ENCODE measurements at regions of chr15 and their contacts with region 1.

Region 1: DNA sequence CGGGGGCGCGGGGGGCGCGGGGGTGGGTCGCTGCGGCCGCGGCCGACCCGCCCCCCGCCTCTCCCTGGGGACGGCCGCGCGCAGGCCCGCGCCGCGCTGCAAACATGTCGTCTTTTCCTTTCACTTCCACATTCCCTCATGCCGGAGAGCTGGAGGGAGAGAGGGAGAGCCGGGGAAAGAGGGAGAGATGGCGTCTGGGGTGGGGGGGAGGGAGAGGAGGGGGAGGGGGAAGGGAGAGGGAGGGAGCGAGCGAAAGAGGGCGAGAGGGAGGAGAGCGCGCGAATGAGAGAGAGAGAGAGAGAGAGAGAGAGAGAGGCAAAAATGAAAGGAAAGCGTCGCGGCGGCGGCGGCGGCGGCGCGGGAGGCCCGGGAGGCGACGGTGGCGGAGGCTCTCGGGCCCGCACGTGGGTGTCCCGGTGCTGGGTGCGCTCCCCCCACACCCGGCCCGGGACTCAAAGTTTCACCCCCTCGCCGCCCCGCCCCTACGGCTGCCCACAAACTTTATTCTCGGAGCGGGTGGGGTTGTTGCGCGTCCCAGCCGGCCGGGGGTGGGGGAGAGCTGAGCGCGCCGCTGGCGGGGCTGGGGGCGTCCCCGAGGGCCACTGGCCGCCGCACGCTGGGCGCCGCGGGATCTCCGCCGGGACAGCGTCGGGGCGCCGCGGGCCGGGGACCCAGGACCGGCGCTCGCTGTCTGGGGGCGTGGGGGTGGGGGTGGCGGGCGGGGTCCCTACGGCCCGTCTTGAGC is 731 bp downstream of the ZNF710 start:
- DNase-seq: no peak
- H3K4me3 ChIP-seq: peak overlapping the region; percentile 87 to 97 (median 90)
- H3K27ac ChIP-seq: peak overlapping the region; percentile 88 to 93 (median 90)
- H3K4me1 ChIP-seq: peaks cover 26 to 63% (median 61%) of the 10 kb centered on the region in 4 donors
- H3K27me3 ChIP-seq: no peaks in the 10 kb centered on the region
- CTCF ChIP-seq: no peak
- EP300 ChIP-seq: no peak
- POLR2A ChIP-seq: no peak

Region 2: DNA sequence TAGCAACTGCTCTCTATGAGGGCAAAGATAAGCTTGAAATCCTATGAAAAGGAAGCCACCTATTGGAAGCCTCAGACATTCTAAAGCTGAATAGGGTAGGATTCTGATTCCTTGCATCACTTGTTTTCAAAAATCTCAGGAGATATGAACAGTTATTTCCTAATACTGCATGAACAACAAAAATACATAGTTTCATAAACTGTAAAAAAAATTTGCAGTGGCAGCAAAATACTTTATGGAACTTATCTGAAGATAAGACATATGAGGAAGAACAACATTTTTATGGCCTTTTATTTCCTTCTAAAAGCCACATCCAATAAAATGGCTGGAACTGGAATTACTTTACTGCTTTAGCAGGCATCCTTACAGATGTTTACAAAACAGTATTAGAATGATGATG is 137.9 kb before region 1 on chr15:
- intact Hi-C with region 1: no loop called
- DNase-seq: no peak
- H3K4me3 ChIP-seq: no peak overlapping the region
- H3K27ac ChIP-seq: no peak overlapping the region
- H3K4me1 ChIP-seq: no peaks in the 10 kb centered on the region
- H3K27me3 ChIP-seq: no peaks in the 10 kb centered on the region
- CTCF ChIP-seq: no peak
- EP300 ChIP-seq: no peak
- POLR2A ChIP-seq: no peak

Region 3: GRCh38 chr15:89912674-89913396 is 89.0 kb before region 1 on chr15 and contains the start of gene ARPIN:
- intact Hi-C with region 1: loop called (anchors 5 kb)
- DNase-seq: no peak
- H3K4me3 ChIP-seq: peak within 1 kb of the TSS; percentile 87 to 98 (median 92)
- H3K27ac ChIP-seq: peak within 1 kb of the TSS; percentile 81 to 88 (median 86)
- H3K4me1 ChIP-seq: peaks cover 13 to 27% (median 25%) of the 10 kb centered on the region in 4 donors
- H3K27me3 ChIP-seq: no peaks in the 10 kb centered on the region
- CTCF ChIP-seq: peak in 1 of 3 experiments; percentile 8
- EP300 ChIP-seq: no peak
- POLR2A ChIP-seq: no peak
- total RNA-seq, gene ARPIN: 19.9 to 26.6 (median 25.4) TPM

Region 4: DNA sequence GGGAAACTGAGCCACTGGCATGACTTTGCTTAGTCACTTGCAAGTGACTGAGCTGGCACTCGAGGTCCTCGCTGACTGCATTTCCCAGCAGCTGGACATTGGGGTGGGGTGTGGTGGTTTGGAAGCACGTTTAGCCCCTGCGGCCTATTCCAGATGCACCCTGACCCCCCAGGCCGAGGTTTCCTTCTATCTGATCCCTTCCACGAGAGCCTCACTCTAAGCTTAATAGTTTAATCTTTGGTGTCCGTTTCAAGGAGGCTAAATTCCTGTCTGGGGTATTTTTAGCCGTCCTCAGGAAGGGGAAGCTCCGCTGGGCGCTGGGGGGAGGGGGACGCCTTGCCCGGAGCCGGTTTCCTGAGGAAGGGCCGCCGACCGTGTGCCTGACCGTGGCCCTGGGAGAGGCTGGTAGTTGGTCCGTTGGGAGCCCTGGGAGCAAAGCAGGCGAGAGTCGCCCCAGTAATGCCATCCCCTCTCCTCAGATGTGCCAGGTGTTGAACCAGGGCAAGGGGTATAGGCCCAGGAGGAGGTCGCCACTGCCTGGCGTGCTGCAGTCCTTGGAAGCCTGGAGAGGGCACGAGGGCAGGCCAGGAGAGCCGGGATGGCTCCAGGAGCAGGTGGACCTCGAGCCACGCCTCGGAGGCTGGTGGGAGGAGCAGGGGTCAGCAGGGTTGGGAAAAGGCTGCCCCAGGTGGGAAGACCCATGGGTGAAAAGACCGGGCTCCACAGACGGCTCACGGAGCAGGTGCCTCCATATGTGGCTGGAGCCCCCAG is 63.2 kb after region 1 on chr15:
- intact Hi-C with region 1: loop called (anchors 5 kb)
- DNase-seq: no peak
- H3K4me3 ChIP-seq: peak overlapping the region in 2 of 4 donors; percentile 9 to 22
- H3K27ac ChIP-seq: peak overlapping the region; percentile 77 to 86 (median 81)
- H3K4me1 ChIP-seq: peaks cover 52 to 59% (median 57%) of the 10 kb centered on the region in 4 donors
- H3K27me3 ChIP-seq: no peaks in the 10 kb centered on the region
- CTCF ChIP-seq: peak in 1 of 3 experiments; percentile 5
- EP300 ChIP-seq: no peak
- POLR2A ChIP-seq: no peak